Left cardiac atrium (tissue), 4 donors: ENCODE measurements at regions of chr20 and their contacts with region 1.

Region 1: DNA sequence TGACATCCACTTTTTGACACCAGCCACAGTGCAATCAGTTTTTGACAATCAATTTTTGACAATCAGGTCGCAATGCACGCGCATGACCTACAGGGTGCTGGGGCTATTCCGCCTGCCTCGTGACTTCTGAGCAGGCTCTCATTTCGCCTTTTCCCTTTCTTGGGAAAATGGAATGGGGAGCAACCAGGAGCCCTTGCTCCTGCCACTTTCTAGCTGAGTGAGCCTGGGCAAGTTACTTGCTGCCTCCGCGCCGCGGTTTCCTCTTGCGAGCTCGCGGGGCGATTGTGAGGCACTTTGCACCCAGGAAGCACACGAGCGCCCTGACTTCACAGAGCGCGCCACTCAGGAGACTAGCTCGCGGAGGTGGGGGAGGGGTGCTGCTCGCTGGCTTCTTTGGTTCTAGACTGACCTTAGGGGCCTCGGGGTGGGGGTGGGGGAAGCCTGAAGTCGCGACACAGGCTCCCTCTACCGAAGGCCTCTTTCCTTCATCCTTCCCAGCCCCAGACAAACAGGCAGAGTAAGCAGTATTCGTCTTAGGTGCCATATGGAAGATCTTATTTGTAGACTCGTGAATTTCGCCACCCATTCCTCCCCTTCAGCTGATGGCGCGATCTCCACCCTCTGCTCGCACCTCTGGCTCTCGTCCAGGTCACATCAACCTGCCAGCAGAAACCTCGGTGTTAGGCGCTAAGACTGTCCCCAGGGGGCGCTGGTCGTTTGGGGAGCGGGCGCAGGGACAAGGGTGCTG is 4.6 kb downstream of the TP53TG5 start:
- DNase-seq: peak; percentile 91
- ATAC-seq: peak; percentile 87 to 88

Region 2: DNA sequence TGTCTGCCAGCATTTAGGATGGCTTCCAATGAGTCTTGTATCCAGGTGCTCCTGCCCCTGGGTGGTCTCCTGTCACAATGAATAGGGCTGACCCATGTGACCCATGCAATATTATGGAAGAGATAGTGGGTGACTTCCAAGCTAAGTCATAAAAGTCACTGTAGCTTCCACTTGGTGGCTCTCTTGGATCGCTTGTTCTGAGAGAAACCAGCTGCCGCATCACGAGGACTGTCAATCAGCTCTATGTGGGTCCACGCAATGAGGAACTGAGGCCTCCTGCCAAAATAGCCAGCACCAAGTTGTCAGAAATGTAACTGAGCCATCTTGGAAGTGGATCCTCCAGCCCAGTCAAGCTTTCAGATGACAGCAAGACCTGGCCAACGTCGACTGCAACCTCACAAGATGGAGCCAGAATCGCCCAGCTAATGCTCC is 50.6 kb before region 1 on chr20:
- intact Hi-C with region 1: loop called in 1 of 2 experiments (anchors 5 kb)
- DNase-seq: peak; percentile 61
- ATAC-seq: peak; percentile 77 to 81

Region 3: DNA sequence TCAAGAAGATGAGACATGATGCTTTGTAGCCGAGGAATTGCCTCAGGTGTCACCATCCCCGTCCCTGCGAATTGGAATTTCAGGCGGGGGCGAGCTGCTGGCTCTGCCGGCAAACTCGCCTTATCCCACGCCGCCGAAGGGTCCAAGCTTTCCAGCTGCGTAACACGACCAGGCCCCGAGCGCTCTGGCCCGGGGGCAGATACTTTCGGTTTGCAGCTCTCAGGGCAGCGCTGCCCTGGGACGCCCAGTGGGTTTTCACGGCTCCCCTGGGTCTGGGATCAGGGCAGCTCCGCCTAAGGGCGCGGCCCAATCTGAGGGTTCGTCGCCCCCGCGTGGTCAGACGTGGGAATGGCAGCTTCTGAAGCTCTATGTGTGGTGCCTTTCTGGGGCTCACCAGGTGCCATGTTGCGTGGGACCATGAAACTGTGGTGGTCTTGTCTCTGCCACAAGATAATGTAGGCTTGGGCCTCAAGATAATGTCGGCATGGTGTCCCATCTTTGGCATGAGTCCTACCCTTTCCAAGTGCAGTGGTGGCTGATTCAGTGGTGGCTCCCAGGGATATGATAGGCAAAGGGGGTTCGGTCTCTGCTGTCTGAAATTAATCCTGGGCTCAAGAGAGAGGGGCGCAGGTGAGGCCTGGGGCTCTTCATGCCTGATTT is 63.3 kb after region 1 on chr20:
- intact Hi-C with region 1: loop called (anchors 2 to 5 kb)
- DNase-seq: peak; percentile 91
- ATAC-seq: peak; percentile 97 to 98

Region 4: GRCh38 chr20:45704969-45705637 is 331.6 kb after region 1 on chr20 and contains the start of gene WFDC10B:
- intact Hi-C with region 1: loop called in 1 of 2 experiments (anchors 5 kb)
- DNase-seq: no peak
- ATAC-seq: peak in 1 of 2 donors; percentile 37
- total RNA-seq, gene WFDC10B: not detected